Posterior vena cava (tissue), 2 donors: ENCODE measurements at regions of chr3 and their contacts with region 1.

Region 1: GRCh38 chr3:188164248-188164687 is 10.3 kb downstream of the LPP start:
- DNase-seq: no peak

Region 2: DNA sequence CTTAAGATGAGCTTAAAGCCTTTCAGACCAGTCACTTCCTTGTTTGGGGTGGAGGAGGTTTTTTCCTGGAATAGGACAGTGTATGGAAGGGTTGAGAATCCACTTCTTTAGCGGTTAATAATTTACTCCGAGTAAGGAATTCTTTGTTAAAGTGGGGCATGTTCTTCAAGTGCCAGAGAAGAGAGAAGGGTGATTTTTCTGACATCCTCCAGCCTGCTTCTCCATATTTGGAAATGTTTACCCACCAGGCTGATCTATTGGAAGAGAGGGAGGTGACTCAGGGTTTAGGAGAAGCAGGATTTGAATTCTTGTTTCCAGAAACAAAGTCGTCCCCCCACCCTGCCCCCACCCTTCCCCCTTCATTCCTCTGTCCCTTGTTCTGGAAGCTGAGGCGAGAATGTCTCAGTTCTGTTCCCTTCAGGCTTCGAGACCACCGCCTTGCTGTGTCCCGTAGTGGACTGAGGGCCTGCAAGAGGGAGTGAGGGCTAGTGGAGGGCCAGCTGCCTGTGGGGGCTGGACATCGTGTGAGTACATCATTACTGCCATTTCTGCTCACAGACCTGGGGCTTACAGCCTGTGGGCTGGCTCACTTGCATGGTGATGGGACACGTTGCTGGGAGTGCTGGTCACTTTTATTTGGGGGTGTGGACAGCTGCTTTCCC is 48.2 kb after region 1 on chr3:
- intact Hi-C with region 1: loop called in 1 of 2 experiments (anchors 5 kb)
- DNase-seq: peak; percentile 81

Region 3: DNA sequence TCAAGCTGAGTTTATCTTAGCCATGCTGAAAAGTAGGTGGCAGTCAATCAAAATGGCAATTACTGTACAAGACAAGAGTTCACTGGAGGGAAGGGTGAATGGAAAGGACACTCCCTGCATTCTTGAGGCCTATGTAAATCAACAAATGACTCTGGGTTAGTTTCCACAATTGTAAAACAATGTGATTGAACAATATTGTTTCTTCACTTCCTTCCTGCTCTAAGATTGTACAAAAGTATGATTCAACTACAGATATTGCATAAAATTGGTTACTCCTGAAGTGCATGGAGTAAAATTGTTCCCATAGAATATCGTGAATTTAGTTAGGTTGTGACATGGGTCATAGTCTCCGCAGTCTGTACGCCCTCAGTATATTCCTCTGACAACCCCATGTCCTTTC is 267.3 kb after region 1 on chr3:
- intact Hi-C with region 1: no loop called
- DNase-seq: no peak